HCT116 (cell line): ENCODE measurements at regions of chr18 and their contacts with region 1.

Region 1: GRCh38 chr18:46155641-46156051 is 51.5 kb downstream of the HAUS1 start:
- DNase-seq: no peak
- ATAC-seq: peak; percentile 66
- H3K4me3 ChIP-seq: peak overlapping the region in 1 of 2 experiments; percentile 33; a peak in 2 of 4 replicates
- H3K27ac ChIP-seq: peak overlapping the region; percentile 16; the same call in 1 of the 2 replicates
- H3K4me1 ChIP-seq: peaks cover 31 to 53% of the 10 kb centered on the region in 2 experiments
- H3K27me3 ChIP-seq: no peaks in the 10 kb centered on the region
- CTCF ChIP-seq: no peak
- POLR2A ChIP-seq: no peak
- RAD21 ChIP-seq: no peak

Region 2: DNA sequence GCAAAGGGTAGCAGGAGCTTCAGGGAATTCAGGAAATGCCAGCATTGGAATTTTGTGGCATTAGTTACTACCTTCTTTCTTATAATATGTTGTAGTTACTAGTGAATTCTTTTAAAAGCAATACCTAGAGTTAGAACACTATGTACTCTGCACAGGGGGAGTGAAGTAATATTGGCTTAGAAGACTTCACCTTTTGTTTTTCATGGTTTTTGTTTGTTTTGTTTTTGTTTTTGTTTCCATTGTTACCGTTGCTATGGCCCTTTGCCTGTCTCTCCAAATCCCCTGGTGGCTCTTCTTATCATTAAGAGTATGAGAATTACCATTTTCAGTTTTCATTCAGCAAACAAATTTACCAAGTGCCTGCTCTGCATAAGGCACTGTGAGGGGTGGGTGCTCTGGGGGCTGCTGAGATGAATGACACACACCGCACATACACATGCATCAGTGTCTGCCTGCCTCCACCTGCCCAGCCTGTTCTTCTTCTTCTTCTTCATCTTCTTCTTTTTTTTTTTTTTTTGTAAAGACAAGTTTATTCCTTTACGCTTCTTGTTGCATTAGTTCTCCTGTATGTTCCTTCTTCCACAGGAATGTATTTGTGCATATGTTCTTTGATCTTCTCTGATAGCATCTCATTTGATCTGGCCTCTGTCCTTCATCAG is 108.7 kb after region 1 on chr18:
- CTCF ChIA-PET with region 1: no interaction called
- POLR2A ChIA-PET with region 1: no interaction called
- RAD21 ChIA-PET with region 1: no interaction called
- intact Hi-C with region 1: loop called (anchors 10 kb)
- DNase-seq: peak; percentile 16
- ATAC-seq: no peak
- H3K4me3 ChIP-seq: no peak overlapping the region
- H3K27ac ChIP-seq: no peak overlapping the region
- H3K4me1 ChIP-seq: peaks cover 0 to 9% of the 10 kb centered on the region in 2 experiments; a peak in 1 of 4 replicates
- H3K27me3 ChIP-seq: no peaks in the 10 kb centered on the region
- CTCF ChIP-seq: no peak
- POLR2A ChIP-seq: no peak
- RAD21 ChIP-seq: no peak

Region 3: DNA sequence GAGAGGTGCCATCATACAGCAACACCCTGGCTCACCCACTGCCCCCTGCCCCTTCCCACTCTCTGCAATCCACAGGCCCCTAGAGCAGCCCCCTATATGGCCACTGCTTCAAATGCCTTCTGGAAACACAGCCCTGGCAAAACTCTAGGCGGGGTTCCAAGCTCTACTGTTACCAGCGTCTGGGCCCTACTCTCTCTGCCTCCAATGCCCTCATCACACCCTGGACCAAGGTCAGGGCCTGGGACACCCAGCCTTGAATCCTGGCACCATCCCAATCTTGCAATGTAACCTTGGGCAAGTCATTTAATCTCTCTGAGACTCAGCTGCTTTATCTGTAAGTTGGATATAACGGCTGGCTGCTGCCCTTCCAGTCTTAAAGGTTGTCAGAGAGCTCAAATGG is 540.6 kb after region 1 on chr18:
- CTCF ChIA-PET with region 1: no interaction called
- POLR2A ChIA-PET with region 1: no interaction called
- RAD21 ChIA-PET with region 1: no interaction called
- intact Hi-C with region 1: no loop called
- DNase-seq: no peak
- ATAC-seq: no peak
- H3K4me3 ChIP-seq: no peak overlapping the region
- H3K27ac ChIP-seq: no peak overlapping the region
- H3K4me1 ChIP-seq: no peaks in the 10 kb centered on the region
- H3K27me3 ChIP-seq: no peaks in the 10 kb centered on the region
- CTCF ChIP-seq: no peak
- POLR2A ChIP-seq: no peak
- RAD21 ChIP-seq: no peak